CD8-positive, alpha-beta T cell (primary cell): ENCODE measurements at regions of chr16 and their contacts with region 1.

Region 1: DNA sequence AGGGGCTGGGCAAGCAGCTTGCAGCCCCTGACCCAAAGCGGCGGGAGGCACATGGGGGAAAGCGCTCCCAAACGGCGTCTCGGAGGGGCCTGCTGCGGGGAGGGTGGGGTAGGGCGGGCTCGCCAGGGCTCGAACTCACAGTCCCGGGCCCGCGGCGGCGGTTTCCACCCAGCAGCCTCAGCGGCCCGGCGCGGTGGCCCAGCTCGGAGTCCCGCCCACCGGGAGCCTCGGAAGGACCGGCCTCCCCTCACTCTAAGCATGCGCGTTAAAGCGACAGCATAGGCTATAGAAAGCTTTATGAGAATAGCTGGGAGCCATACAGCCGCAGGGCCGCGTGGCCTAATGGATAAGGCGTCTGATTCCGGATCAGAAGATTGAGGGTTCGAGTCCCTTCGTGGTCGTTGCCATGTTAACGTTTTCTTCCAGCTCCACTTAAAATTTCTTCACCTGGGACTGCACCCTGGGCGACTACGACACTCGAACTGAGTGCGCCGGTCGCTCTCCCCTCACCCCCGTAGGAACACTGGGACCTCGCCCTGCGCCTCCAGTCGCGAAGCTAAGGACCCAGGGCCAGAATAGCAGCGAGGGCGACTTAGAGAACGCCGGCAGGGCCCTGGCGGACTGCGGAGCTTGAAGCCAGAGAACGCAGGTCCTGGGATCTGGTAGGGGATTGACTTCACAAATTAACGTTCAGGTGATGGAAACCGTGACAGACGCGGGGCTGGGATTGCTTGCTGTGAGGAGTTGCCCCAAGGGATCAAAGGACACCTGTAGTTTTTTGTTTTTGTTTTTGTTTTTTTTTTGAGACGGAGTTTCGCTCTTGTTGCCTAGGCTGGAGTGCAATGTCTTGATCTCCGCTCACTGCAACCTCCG is 15.8 kb downstream of the ZNF213 start:
- DNase-seq: peak; percentile 94 to 100 (median 97)
- ATAC-seq: peak; percentile 82
- H3K4me3 ChIP-seq: peak overlapping the region; percentile 53 to 93
- H3K4me3 Mint-ChIP-seq: peak overlapping the region; percentile 88
- H3K27ac ChIP-seq: peak overlapping the region; percentile 53 to 68
- H3K27ac Mint-ChIP-seq: peak overlapping the region; percentile 88
- H3K4me1 ChIP-seq: peaks cover 23% of the 10 kb centered on the region
- H3K4me1 Mint-ChIP-seq: peaks cover 27% of the 10 kb centered on the region
- H3K27me3 ChIP-seq: no peaks in the 10 kb centered on the region
- H3K27me3 Mint-ChIP-seq: no peaks in the 10 kb centered on the region
- CTCF ChIP-seq: no peak

Region 2: DNA sequence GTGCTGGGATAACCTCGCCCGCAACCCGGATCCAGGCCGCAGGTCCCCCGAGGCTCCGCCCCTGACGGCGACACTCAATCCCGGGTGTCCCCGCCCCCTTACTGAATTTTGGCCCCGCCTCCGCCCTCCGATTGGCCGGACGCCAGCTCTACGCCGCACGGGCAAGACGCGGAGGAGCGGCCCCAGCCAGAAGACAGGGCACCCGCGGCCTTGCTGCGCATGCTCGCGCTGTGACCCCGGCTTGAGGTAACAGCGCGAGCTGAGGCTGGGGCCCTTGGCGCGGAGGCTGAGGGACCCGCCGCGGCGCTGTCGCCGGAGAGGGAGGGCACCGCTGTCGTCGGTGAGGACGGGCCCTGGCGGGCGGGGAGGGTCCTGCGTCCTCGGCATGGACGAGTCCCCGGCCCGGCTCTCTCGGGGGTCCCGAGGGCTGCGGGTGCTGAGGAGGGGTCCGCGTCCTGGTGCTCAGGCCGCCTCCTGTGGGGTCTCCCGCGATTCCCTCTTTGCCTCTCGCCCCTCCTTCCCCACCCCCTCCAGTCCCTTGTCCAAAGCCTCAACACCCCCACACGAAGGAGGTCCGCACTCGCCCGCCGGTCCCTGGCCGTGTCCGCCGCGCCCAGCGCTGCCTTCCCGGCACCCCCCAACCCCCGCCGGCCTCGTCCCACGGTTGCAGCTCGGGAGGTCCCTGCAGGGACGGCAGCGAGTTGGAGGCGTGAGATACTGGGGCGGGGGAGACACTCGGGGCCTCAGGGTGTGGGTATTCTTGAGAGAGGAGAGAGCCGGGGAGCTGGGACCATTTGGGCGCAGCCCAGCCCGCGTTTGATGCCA is 267.3 kb before region 1 on chr16 and contains the start of gene FLYWCH2:
- CTCF ChIA-PET with region 1: no interaction called
- POLR2A ChIA-PET with region 1: no interaction called
- intact Hi-C with region 1: loop called in 1 of 2 experiments (anchors 2 kb)
- DNase-seq: peak; percentile 98 to 100 (median 99)
- ATAC-seq: peak; percentile 83
- H3K4me3 ChIP-seq: peak within 1 kb of the TSS; percentile 69 to 78
- H3K4me3 Mint-ChIP-seq: peak within 1 kb of the TSS; percentile 87
- H3K27ac ChIP-seq: peak within 1 kb of the TSS; percentile 90 to 94
- H3K27ac Mint-ChIP-seq: peak within 1 kb of the TSS; percentile 95
- H3K4me1 ChIP-seq: peaks cover 9% of the 10 kb centered on the region
- H3K4me1 Mint-ChIP-seq: peaks cover 17% of the 10 kb centered on the region
- H3K27me3 ChIP-seq: no peaks in the 10 kb centered on the region
- H3K27me3 Mint-ChIP-seq: no peaks in the 10 kb centered on the region
- CTCF ChIP-seq: no peak
- total RNA-seq, gene FLYWCH2: 9.3 to 10.9 TPM

Region 3: DNA sequence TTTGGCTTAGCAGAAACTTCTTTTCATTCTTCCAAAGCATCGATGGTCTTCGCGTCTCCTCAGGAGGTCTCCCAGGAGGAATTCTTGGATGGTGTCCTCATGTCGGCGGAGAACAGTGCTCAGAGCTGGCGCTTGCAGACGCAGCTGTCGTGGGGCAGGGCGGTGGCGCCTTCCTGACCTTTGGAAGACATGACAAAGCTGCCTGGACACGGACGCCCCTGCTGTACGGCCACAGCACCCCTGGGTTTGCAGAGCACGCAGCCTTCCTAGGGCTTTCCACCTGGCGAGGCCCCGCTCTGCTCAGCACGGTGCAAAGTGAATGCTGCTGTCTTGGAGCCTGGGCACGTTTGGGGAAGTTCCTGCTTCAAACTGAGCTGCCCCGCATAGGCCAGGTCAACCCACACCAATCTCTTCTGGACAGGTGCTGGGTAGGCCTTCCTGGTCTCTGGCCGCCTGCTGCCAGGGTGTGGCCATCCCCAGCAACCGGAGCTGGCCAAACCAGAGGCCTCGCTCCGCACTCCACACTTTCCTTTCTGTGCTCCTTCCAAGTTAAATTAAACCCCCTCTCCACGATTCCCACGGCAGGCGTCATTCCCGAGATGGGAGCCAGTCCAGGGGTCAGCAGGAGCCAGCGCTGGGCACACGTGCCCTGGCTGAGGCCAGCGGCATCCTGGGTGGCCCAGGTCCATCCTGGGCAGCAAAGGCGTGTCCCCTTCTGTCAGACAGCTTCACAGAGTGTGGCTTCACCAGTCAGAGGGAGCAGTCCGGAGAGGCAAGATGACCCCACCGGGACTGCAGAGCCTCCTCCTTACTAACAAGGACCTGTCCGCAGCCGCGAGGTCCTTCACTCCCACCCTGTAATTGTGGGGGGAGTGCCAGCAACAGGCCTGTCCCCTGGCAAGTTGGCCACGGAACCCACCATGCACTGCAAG is 201.5 kb before region 1 on chr16:
- CTCF ChIA-PET with region 1: no interaction called
- POLR2A ChIA-PET with region 1: no interaction called
- intact Hi-C with region 1: no loop called
- DNase-seq: peak in 1 of 9 experiments; percentile 7
- ATAC-seq: no peak
- H3K4me3 ChIP-seq: no peak overlapping the region
- H3K4me3 Mint-ChIP-seq: no peak overlapping the region
- H3K27ac ChIP-seq: no peak overlapping the region
- H3K27ac Mint-ChIP-seq: no peak overlapping the region
- H3K4me1 ChIP-seq: no peaks in the 10 kb centered on the region
- H3K4me1 Mint-ChIP-seq: no peaks in the 10 kb centered on the region
- H3K27me3 ChIP-seq: peaks cover 0 to 2% of the 10 kb centered on the region in 2 experiments
- H3K27me3 Mint-ChIP-seq: no peaks in the 10 kb centered on the region
- CTCF ChIP-seq: no peak

Region 4: DNA sequence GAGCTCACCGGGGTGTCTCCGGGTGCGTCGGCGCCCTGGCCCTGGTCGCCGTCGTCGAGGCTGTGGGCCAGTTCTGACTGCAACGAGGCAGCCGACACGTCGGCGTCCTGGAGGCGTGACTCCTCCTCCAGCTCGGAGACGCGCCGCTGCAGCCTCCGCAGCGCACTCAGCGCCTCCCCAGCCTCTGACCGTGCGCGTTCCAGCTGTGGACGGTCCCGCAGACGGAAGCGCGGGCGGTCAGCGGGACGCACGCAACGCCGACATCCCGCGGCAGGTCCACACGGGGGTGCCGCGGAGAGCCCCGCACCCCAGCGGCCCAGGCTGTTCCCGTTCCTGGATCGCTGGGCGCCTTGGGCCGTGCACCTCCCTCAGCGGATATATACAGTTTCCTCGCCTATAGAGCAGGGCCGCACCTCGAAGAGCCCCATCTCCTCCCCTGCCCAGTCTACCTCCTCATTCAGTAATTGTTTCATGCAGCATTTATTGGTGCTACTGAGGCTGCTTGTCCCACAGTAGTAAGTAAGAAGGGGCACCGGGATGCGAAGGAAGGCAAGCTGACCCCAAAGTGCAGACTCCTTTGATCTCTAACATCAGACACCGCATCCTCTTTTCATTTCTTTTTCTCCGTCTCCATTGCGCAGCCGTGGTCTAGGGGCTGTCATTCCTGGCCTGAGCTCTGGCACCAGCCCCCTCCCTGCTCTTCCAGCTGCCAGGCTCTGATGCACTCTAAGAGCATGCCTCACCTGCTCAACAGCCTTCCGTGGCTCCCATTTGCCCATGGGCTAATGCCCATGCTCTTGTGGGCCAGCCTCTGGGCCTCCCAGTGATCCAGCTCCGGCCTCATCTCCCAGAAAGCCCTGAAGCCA is 120.8 kb before region 1 on chr16:
- CTCF ChIA-PET with region 1: interaction called, 11 read pairs
- POLR2A ChIA-PET with region 1: no interaction called
- intact Hi-C with region 1: loop called in 1 of 2 experiments (anchors 1 kb)
- DNase-seq: peak in 4 of 9 experiments; percentile 26 to 64 (median 42)
- ATAC-seq: peak; percentile 15
- H3K4me3 ChIP-seq: peak overlapping the region in 1 of 2 experiments; percentile 28
- H3K4me3 Mint-ChIP-seq: peak overlapping the region; percentile 66
- H3K27ac ChIP-seq: no peak overlapping the region
- H3K27ac Mint-ChIP-seq: no peak overlapping the region
- H3K4me1 ChIP-seq: peaks cover 33% of the 10 kb centered on the region
- H3K4me1 Mint-ChIP-seq: peaks cover 18% of the 10 kb centered on the region
- H3K27me3 ChIP-seq: peaks cover 20 to 30% of the 10 kb centered on the region in 2 experiments
- H3K27me3 Mint-ChIP-seq: peaks cover 38% of the 10 kb centered on the region
- CTCF ChIP-seq: no peak

Region 5: GRCh38 chr16:3106205-3106928 is 44.2 kb before region 1 on chr16:
- CTCF ChIA-PET with region 1: no interaction called
- POLR2A ChIA-PET with region 1: no interaction called
- intact Hi-C with region 1: loop called in 1 of 2 experiments (anchors 1 kb)
- DNase-seq: peak; percentile 79 to 95 (median 90)
- ATAC-seq: peak; percentile 94
- H3K4me3 ChIP-seq: peak overlapping the region; percentile 74 to 77
- H3K4me3 Mint-ChIP-seq: peak overlapping the region; percentile 86
- H3K27ac ChIP-seq: peak overlapping the region; percentile 75 to 93
- H3K27ac Mint-ChIP-seq: peak overlapping the region; percentile 89
- H3K4me1 ChIP-seq: peaks cover 24% of the 10 kb centered on the region
- H3K4me1 Mint-ChIP-seq: peaks cover 26% of the 10 kb centered on the region
- H3K27me3 ChIP-seq: no peaks in the 10 kb centered on the region
- H3K27me3 Mint-ChIP-seq: no peaks in the 10 kb centered on the region
- CTCF ChIP-seq: no peak

Region 6: GRCh38 chr16:3134564-3135417 is 15.8 kb before region 1 on chr16 and contains the start of gene ZNF213:
- CTCF ChIA-PET with region 1: interaction called, 6 read pairs
- POLR2A ChIA-PET with region 1: interaction called, 28 read pairs
- intact Hi-C with region 1: loop called (anchors 1 kb)
- DNase-seq: peak; percentile 84 to 99 (median 92)
- ATAC-seq: peak; percentile 99
- H3K4me3 ChIP-seq: peak within 1 kb of the TSS; percentile 89 to 93
- H3K4me3 Mint-ChIP-seq: peak within 1 kb of the TSS; percentile 95
- H3K27ac ChIP-seq: peak within 1 kb of the TSS; percentile 94 to 95
- H3K27ac Mint-ChIP-seq: peak within 1 kb of the TSS; percentile 99
- H3K4me1 ChIP-seq: peaks cover 15% of the 10 kb centered on the region
- H3K4me1 Mint-ChIP-seq: peaks cover 29% of the 10 kb centered on the region
- H3K27me3 ChIP-seq: no peaks in the 10 kb centered on the region
- H3K27me3 Mint-ChIP-seq: no peaks in the 10 kb centered on the region
- CTCF ChIP-seq: peak; percentile 5
- total RNA-seq, gene ZNF213: 1.8 to 2.2 TPM

Region 7: DNA sequence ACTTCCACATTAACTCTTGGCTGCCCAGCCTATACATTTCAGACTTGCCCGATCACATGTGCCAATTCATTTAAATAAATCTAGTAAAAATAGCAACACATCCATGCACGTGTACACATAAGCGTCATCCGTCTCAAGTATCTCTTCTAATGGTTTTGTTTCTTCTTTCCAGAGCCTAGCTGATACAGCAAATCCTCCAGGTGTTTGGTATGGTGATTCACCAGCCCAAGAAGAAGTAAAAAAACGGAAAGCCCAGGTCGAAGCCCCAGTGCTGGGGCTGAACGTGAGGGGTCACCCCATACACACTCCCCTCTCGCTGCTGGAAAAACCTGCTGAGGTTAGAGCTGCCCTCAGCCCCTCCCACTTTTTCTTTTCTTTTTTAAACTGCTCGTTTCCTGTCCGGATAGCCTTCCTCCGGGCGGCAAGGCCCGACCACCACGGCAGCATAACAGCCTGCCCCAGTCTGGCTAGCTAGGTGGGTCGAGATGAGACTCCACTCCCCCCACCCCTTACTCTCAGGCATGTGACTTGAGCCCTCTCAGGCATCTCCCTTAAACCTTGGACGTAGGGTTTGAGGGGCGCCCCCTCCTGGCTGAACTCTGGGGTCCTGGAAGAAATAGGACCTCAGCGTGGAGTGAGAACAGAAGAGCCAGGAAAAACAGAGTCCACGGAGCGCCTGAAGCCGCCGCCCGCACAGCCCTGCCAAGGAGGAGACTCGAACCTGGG is 23.5 kb after region 1 on chr16:
- CTCF ChIA-PET with region 1: interaction called, 10 read pairs
- POLR2A ChIA-PET with region 1: no interaction called
- intact Hi-C with region 1: no loop called
- DNase-seq: peak in 1 of 9 experiments; percentile 38
- ATAC-seq: peak; percentile 7
- H3K4me3 ChIP-seq: no peak overlapping the region
- H3K4me3 Mint-ChIP-seq: peak overlapping the region; percentile 26
- H3K27ac ChIP-seq: no peak overlapping the region
- H3K27ac Mint-ChIP-seq: no peak overlapping the region
- H3K4me1 ChIP-seq: peaks cover 44% of the 10 kb centered on the region
- H3K4me1 Mint-ChIP-seq: peaks cover 39% of the 10 kb centered on the region
- H3K27me3 ChIP-seq: peaks cover 30 to 54% of the 10 kb centered on the region in 2 experiments
- H3K27me3 Mint-ChIP-seq: peaks cover 47% of the 10 kb centered on the region
- CTCF ChIP-seq: no peak